PC-3 (cell line): ENCODE measurements at regions of chr1 and their contacts with region 1.

Region 1: DNA sequence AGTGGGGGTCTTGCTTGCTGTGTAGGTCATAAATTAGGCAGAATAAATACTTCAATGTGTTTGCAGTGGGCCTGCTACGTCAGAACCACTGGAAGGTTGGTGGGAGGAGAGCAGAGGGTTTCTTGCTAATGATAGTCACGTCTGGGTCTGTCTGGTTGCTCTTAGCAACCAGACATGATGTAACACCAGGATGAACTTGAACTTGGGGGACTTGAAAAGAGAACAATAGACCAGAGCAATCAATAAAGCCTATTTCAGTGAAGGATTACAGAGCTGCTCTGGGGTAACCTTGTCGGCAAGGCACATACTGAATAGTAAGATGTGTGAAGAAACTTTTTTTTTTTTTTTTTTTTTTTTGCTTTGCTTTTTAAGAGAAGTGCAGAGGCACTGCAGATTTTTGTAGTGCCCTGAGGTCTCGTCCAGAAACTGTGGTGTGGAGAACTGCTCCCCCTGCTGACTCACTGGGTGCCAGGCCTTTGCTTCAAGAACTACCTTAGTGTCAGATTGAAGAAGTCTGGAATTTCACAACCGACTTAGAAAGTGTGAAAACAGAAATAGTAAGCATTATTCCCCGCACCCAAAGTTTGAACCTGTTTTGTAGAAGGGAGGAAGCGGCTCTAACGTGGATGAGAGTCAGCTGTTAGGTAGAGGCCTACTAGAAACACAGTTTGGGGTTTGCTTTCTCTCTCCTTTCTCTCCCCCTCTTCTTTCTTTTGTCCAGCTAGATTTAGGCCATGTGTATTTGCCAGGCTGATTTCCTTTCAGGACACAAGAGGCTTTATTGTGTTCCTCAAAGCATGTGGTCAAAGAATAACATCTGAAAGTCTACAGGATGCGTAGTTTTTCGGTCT is 271.6 kb downstream of the TM2D1 start:
- DNase-seq: peak; percentile 83
- ATAC-seq: peak; percentile 96
- H3K4me3 ChIP-seq: no peak overlapping the region
- H3K27ac ChIP-seq: no peak overlapping the region
- H3K4me1 ChIP-seq: peaks cover 35% of the 10 kb centered on the region
- H3K27me3 ChIP-seq: no peaks in the 10 kb centered on the region
- CTCF ChIP-seq: peak; percentile 86

Region 2: GRCh38 chr1:60969971-60970509 is 483.3 kb before region 1 on chr1:
- CTCF ChIA-PET with region 1: no interaction called
- POLR2A ChIA-PET with region 1: interaction called, 3 read pairs
- intact Hi-C with region 1: loop called (anchors 2 kb)
- DNase-seq: peak; percentile 48
- ATAC-seq: peak; percentile 70
- H3K4me3 ChIP-seq: no peak overlapping the region
- H3K27ac ChIP-seq: no peak overlapping the region
- H3K4me1 ChIP-seq: peaks cover 11% of the 10 kb centered on the region
- H3K27me3 ChIP-seq: no peaks in the 10 kb centered on the region
- CTCF ChIP-seq: peak; percentile 69

Region 3: GRCh38 chr1:61049850-61050540 is 403.3 kb before region 1 on chr1:
- CTCF ChIA-PET with region 1: interaction called, 3 read pairs
- POLR2A ChIA-PET with region 1: no interaction called
- intact Hi-C with region 1: loop called (anchors 1 kb)
- DNase-seq: peak; percentile 94
- ATAC-seq: peak; percentile 84
- H3K4me3 ChIP-seq: peak overlapping the region; percentile 87
- H3K27ac ChIP-seq: no peak overlapping the region
- H3K4me1 ChIP-seq: peaks cover 4% of the 10 kb centered on the region; the same call in 1 of the 2 replicates
- H3K27me3 ChIP-seq: no peaks in the 10 kb centered on the region
- CTCF ChIP-seq: peak; percentile 91

Region 4: GRCh38 chr1:61293986-61294504 is 159.3 kb before region 1 on chr1:
- CTCF ChIA-PET with region 1: no interaction called
- POLR2A ChIA-PET with region 1: no interaction called
- intact Hi-C with region 1: loop called (anchors 1 kb)
- DNase-seq: peak; percentile 80
- ATAC-seq: peak; percentile 83
- H3K4me3 ChIP-seq: no peak overlapping the region
- H3K27ac ChIP-seq: peak overlapping the region; percentile 80
- H3K4me1 ChIP-seq: peaks cover 42% of the 10 kb centered on the region
- H3K27me3 ChIP-seq: no peaks in the 10 kb centered on the region
- CTCF ChIP-seq: no peak

Region 5: GRCh38 chr1:61539720-61540462 is 86.6 kb after region 1 on chr1:
- CTCF ChIA-PET with region 1: interaction called, 17 read pairs
- POLR2A ChIA-PET with region 1: no interaction called
- intact Hi-C with region 1: loop called (anchors 5 kb)
- DNase-seq: peak; percentile 95
- ATAC-seq: peak; percentile 75
- H3K4me3 ChIP-seq: no peak overlapping the region
- H3K27ac ChIP-seq: peak overlapping the region; percentile 87
- H3K4me1 ChIP-seq: peaks cover 41% of the 10 kb centered on the region
- H3K27me3 ChIP-seq: no peaks in the 10 kb centered on the region
- CTCF ChIP-seq: no peak